RWPE1 (cell line): ENCODE measurements at regions of chr11 and their contacts with region 1.

Region 1: DNA sequence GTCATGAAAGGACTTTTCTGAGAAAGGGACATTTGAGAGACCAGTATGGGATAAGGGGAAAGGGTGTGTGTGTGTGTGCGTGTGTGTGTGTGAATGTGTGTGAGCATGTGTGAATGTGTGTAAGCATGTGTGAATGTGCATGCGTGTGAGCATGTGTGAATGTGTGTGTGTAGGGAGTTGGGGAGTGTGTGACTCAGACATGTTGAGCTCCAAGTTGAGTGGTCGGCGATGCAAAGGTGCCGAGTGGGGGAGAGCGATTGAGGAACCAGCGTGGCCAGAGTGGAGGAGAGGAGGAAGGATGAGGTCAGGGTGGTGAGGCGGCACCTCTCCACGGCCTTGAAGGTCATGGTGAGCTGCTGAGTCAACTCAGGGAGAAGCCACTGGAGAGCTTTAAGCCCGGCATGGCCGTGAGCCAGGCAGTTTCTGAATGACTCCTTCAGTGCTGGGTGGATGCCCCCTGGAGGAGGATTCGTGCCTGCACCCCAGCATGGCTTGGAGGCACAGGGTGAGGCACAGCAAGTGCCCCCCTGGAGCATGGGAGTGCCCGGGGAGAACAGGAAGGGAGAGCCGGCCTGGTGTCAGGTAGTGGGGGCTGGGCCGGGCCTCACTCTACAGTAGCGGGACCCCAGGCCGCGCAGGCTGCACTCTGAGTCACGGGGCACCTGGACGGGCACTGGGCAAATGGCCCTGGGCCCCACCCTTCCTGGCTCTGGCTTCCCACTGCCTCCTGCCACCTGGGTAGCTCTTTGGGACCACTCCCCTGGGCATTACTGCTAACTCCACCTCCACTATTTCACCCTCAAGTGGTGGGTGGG is 8.2 kb upstream of the CCDC88B start:
- DNase-seq: peak; percentile 85
- H3K27ac ChIP-seq: peak overlapping the region; percentile 98
- CTCF ChIP-seq: peak; percentile 75

Region 2: DNA sequence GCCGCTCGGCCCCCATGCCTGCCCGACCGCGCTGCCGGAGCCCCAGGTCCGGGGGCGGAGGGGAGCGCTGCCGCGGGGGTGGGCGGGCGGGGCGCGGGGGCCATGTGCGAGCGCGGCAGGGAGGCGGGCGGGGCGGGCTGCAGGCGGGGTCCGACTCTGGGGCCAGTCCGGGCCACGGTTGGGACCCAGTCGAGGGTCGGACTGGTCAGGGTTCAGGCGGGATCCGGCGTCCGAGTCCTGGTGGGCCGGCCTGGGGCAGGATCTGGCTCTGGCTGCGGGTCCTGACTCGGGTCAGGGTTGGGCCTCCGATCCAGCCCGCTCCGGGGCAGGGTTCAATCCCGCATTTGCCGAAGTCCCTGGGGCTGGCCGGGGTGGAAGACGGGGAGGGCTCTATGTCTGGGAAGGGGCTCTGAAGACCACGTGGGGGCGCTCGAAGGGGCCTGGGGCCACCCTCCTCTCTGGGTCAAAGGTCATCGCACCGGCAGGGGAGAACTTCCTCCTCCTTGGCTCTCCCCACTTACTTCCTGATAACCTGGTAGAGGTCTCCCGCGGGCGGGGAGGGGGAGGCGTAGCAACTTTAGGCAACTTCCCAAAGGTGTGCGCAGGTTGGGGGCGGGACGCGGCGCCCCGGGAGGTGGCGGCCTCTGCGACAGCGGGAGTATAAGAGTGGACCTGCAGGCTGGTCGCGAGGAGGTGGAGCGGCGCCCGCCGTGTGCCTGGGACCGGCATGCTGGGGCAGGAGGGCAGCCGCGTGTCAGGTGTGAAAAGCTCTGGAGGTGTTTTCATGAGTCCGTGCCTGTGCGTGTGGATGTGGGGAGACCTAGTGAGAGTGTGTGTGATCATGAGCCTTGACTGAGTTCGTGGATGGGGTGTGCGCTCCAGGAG is 25.8 kb before region 1 on chr11:
- CTCF ChIA-PET with region 1: interaction called, 4 read pairs
- POLR2A ChIA-PET with region 1: interaction called, 11 read pairs
- DNase-seq: no peak
- H3K27ac ChIP-seq: peak overlapping the region; percentile 100
- CTCF ChIP-seq: peak; percentile 50

Region 3: GRCh38 chr11:64317957-64318693 is 13.6 kb before region 1 on chr11 and contains the start of gene PRDX5:
- CTCF ChIA-PET with region 1: interaction called, 22 read pairs
- POLR2A ChIA-PET with region 1: interaction called, 17 read pairs
- DNase-seq: peak; percentile 90
- H3K27ac ChIP-seq: peak within 1 kb of the TSS; percentile 100
- CTCF ChIP-seq: peak; percentile 58

Region 4: DNA sequence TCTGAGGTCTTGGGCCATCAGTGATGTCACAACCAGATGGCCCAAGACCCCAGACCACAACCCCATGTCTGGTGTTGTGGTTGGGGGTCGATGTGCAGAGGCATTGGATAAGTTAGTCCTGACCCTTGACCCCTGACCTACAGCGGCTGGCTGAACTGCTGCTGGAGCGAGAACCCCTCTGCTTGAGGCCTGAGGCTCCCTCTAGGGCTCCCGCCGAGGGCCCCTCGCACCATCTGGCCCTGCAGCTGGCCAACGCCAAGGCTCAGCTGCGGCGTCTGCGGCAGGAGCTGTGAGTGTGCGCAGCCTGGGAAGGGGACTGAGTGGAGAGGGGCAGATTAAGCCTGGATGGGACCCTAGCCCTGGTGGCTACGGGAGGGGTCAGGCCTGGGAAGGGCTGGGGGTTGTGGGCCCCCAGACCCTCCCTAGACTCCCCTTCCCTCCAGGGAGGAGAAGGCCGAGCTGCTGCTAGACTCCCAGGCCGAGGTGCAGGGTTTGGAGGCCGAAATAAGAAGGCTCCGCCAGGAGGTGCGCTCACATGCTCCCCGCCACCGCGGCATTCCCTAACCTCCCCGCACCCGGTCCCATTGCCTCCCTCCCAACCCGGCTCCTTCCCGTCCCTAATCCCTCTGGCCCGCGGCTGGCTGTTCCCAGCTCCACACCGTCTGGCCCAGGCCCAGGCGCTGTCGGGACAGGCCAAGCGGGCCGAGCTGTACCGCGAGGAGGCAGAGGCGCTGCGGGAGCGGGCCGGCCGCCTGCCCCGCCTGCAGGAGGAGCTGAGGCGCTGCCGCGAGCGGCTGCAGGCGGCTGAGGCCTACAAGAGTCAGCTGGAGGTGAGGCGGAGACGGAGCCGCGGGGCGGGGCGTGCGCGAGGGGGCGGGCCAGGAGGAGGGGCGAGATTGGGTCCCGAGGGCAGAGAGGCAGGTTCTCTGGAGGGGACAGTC is 10.4 kb after region 1 on chr11:
- CTCF ChIA-PET with region 1: interaction called, 11 read pairs
- POLR2A ChIA-PET with region 1: no interaction called
- DNase-seq: peak; percentile 88
- H3K27ac ChIP-seq: peak overlapping the region; percentile 92
- CTCF ChIP-seq: peak; percentile 82

Region 5: GRCh38 chr11:64369440-64370211 is 37.9 kb after region 1 on chr11:
- CTCF ChIA-PET with region 1: no interaction called
- POLR2A ChIA-PET with region 1: no interaction called
- DNase-seq: no peak
- H3K27ac ChIP-seq: no peak overlapping the region
- CTCF ChIP-seq: no peak